Mammary epithelial cell (primary cell): ENCODE measurements at regions of chr5 and their contacts with region 1.

Region 1: GRCh38 chr5:29780401-29780800 is 1413.1 kb upstream of the CDH6 start:
- DNase-seq: no peak
- H3K4me3 ChIP-seq: no peak overlapping the region
- H3K27ac ChIP-seq: no peak overlapping the region
- H3K4me1 ChIP-seq: no peaks in the 10 kb centered on the region
- H3K27me3 ChIP-seq: no peaks in the 10 kb centered on the region
- CTCF ChIP-seq: no peak

Region 2: DNA sequence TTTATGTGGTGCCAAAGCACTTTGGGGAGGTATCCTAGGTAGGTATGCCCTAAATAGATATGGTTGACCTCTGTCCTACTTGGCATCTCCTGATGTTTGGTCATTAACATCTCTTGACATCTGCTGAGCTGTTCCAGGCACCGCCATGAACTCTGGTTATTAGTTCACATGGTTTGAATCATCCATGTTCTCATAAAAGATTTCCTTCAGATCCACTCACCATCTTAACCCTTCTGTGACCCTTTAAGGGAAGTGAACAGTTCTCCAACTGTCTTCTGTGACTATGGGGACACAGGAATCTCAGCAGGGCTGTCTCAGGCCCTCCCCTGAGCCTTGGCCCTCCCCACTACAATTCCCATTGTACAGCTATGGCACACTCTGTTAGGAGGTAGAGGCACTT is 1580.8 kb after region 1 on chr5:
- CTCF ChIA-PET with region 1: interaction called, 19 read pairs
- dilution Hi-C with region 1: no loop called
- in situ Hi-C with region 1: no loop called
- intact Hi-C with region 1: no loop called
- DNase-seq: peak; percentile 57
- H3K4me3 ChIP-seq: no peak overlapping the region
- H3K27ac ChIP-seq: no peak overlapping the region
- H3K4me1 ChIP-seq: no peaks in the 10 kb centered on the region
- H3K27me3 ChIP-seq: no peaks in the 10 kb centered on the region
- CTCF ChIP-seq: no peak